Mammary epithelial cell (primary cell): ENCODE measurements at regions of chr11 and their contacts with region 1.

Region 1: GRCh38 chr11:86418917-86419316 is 44.2 kb downstream of the CCDC81 start:
- DNase-seq: peak; percentile 27
- H3K4me3 ChIP-seq: no peak overlapping the region
- H3K27ac ChIP-seq: no peak overlapping the region
- H3K4me1 ChIP-seq: peaks cover 4% of the 10 kb centered on the region
- H3K27me3 ChIP-seq: no peaks in the 10 kb centered on the region
- CTCF ChIP-seq: peak; percentile 20 to 51

Region 2: GRCh38 chr11:85941380-85941973 is 477.4 kb before region 1 on chr11:
- CTCF ChIA-PET with region 1: no interaction called
- dilution Hi-C with region 1: no loop called
- in situ Hi-C with region 1: loop called in 1 of 2 experiments (anchors 25 kb)
- intact Hi-C with region 1: loop called (anchors 5 kb)
- DNase-seq: peak; percentile 46
- H3K4me3 ChIP-seq: no peak overlapping the region
- H3K27ac ChIP-seq: no peak overlapping the region
- H3K4me1 ChIP-seq: peaks cover 4% of the 10 kb centered on the region
- H3K27me3 ChIP-seq: no peaks in the 10 kb centered on the region
- CTCF ChIP-seq: peak; percentile 57 to 78

Region 3: DNA sequence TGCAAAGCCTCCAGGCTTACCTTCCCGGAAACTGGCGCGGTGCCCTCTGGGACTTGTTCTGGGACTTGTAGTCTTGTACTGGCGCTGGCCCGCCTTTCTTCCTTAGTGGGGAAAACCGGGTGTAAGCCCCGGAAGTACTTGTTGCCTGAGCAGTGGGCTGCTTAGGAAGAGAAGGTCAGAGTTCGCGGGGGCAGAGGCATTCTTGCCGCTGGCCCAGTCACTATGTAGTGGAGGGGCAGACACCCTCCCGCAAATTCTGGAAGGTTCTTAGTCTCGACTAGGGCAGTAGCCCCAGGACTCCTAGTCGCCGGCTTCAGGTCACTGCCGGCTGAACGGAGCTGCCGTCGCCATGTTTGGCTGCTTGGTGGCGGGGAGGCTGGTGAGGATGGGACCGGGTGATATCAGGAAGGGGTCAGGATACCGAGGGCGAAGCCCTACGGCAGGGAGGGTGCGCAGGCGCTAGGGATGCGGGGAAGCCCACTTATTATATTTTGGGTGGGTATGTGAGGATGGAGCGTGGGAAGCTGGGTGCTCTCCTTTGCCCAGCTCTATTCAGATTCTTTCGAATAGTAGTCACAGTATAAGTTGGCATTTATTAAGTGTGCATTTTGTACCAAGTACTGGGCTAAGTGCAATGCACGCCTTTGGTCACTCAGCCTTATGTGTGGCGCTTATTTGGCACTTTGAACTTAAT is 116.7 kb before region 1 on chr11 and contains the start of gene HIKESHI:
- CTCF ChIA-PET with region 1: no interaction called
- dilution Hi-C with region 1: no loop called
- in situ Hi-C with region 1: no loop called
- intact Hi-C with region 1: loop called (anchors 5 kb)
- DNase-seq: peak; percentile 95
- H3K4me3 ChIP-seq: peak within 1 kb of the TSS; percentile 65 to 79 (median 74)
- H3K27ac ChIP-seq: peak within 1 kb of the TSS; percentile 78
- H3K4me1 ChIP-seq: no peaks in the 10 kb centered on the region
- H3K27me3 ChIP-seq: no peaks in the 10 kb centered on the region
- CTCF ChIP-seq: no peak
- total RNA-seq, gene HIKESHI: 42.5 to 48.3 TPM

Region 4: DNA sequence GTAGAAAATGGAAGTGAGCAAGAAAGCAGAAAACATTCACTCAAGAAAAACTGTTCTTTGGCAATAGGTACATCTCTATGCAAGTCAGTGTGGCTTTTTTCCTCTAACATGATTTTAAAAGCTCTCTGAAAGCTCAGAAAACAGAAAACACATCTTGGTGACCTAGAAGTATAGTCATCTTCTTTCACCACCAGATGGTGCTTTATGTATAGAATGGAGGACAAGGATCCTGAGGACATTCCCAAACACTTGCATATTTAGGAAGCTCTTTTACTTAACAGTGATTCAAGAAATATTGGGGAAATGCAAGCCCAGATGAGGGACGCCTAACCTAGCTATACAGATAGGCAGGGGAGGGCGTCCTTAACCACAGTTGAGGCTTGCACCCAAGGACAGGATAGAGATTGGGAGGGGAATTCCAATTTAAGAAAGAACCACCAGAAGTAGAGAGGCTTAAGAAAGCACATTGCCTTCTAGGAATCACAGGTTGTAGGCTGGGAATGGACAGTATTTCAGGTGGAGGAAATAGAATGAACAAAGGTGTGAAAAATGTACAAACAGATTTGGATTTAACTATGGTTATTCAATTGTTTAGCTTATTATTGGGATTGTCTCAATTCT is 58.0 kb before region 1 on chr11:
- CTCF ChIA-PET with region 1: interaction called, 4 read pairs
- dilution Hi-C with region 1: no loop called
- in situ Hi-C with region 1: no loop called
- intact Hi-C with region 1: loop called (anchors 1 kb)
- DNase-seq: peak; percentile 31
- H3K4me3 ChIP-seq: no peak overlapping the region
- H3K27ac ChIP-seq: no peak overlapping the region
- H3K4me1 ChIP-seq: no peaks in the 10 kb centered on the region
- H3K27me3 ChIP-seq: no peaks in the 10 kb centered on the region
- CTCF ChIP-seq: peak; percentile 33 to 64

Region 5: GRCh38 chr11:86370922-86371594 is 47.9 kb before region 1 on chr11:
- CTCF ChIA-PET with region 1: no interaction called
- dilution Hi-C with region 1: no loop called
- in situ Hi-C with region 1: no loop called
- intact Hi-C with region 1: loop called (anchors 5 kb)
- DNase-seq: peak; percentile 83
- H3K4me3 ChIP-seq: no peak overlapping the region
- H3K27ac ChIP-seq: peak overlapping the region; percentile 20
- H3K4me1 ChIP-seq: peaks cover 30% of the 10 kb centered on the region
- H3K27me3 ChIP-seq: no peaks in the 10 kb centered on the region
- CTCF ChIP-seq: no peak

Region 6: GRCh38 chr11:86486261-86487028 is 67.5 kb after region 1 on chr11:
- CTCF ChIA-PET with region 1: no interaction called
- dilution Hi-C with region 1: no loop called
- in situ Hi-C with region 1: no loop called
- intact Hi-C with region 1: no loop called
- DNase-seq: no peak
- H3K4me3 ChIP-seq: no peak overlapping the region
- H3K27ac ChIP-seq: no peak overlapping the region
- H3K4me1 ChIP-seq: peaks cover 19% of the 10 kb centered on the region
- H3K27me3 ChIP-seq: no peaks in the 10 kb centered on the region
- CTCF ChIP-seq: no peak